IMR-90 (cell line): ENCODE measurements at regions of chr6 and their contacts with region 1.

Region 1: DNA sequence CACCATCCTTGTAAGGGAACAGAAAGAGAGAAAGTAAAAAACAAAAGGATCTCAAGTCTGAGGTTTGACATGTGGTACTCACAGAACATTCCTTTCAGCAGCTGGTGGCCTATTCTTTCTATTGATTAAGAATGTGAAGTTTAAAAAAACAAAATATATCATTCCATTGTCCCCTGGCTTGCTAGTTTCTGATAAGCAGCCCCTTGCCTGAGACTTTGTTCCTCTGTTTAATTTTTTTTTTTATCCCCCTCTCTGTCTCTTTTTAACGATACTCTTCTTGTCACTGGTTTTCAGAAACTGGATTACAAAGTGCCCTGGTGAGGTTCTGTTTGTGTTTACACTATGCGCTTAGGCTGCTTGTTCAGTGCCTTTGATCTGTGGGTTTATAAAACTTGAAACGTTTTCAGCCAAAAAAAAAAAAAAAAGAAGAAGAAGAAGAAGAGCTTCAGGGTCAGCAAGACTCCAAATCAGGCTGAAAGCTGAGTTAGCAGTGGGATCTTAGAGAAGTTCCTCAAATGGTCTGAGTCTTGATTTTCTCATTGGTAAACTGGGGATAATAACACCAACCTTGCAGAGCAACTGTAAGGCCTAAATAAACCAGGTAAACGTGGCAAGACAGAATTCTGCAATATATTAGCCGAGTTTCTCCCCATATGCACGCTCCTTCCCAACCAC is 45.1 kb upstream of the SLC22A23 start:
- DNase-seq: no peak
- ATAC-seq: no peak
- H3K4me3 ChIP-seq: no peak overlapping the region
- H3K27ac ChIP-seq: no peak overlapping the region
- H3K4me1 ChIP-seq: peaks cover 5% of the 10 kb centered on the region; the same call in 1 of the 2 replicates
- H3K27me3 ChIP-seq: peaks cover 43% of the 10 kb centered on the region
- CTCF ChIP-seq: no peak
- POLR2A ChIP-seq: no peak
- RAD21 ChIP-seq: no peak

Region 2: GRCh38 chr6:3403238-3404173 is 98.5 kb before region 1 on chr6:
- CTCF ChIA-PET with region 1: interaction called, 11 read pairs
- POLR2A ChIA-PET with region 1: no interaction called
- dilution Hi-C with region 1: no loop called
- in situ Hi-C with region 1: no loop called
- intact Hi-C with region 1: no loop called
- DNase-seq: no peak
- ATAC-seq: no peak
- H3K4me3 ChIP-seq: no peak overlapping the region
- H3K27ac ChIP-seq: no peak overlapping the region
- H3K4me1 ChIP-seq: no peaks in the 10 kb centered on the region
- H3K27me3 ChIP-seq: peaks cover 22% of the 10 kb centered on the region
- CTCF ChIP-seq: no peak
- POLR2A ChIP-seq: no peak
- RAD21 ChIP-seq: no peak